ENCODE measurements at regions of chr19 and their contacts with region 1.

Region 1: DNA sequence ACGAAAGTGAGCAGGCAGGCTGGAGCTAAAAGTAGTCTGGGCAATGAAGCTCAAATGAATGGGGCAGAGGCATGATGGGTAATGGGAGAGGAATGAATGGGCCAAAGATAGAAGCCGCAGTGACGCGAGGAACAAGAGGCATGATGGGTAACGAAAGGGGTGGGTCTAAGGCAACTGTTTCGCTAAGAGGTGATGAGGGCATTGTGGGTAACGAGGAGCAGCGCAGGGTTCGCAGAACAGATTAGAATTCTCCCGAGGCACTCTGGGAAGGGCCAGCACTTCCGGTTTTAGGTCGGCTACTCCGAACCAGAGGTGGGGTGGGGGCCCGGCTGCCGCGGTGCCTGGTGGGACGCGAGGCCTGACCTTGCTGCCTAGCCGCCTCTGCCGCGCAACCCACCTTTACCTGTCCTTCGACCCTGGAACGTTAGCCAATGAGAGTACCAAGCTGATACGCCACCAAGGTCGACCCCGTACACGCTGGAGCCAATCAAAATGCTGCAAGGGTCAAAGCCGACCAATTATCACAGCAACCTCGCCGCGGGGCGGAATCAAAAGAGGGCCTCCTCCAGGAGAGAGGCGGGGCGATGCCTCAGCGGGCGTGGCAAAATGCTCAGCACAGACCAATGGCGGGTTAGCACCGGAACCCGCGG is 563 bp upstream of the TOMM40 start:
- DNase-seq: no peak
- ATAC-seq: peak; percentile 84
- H3K4me3 Mint-ChIP-seq: peak overlapping the region; percentile 74
- H3K27ac Mint-ChIP-seq: peak overlapping the region; percentile 96
- H3K4me1 Mint-ChIP-seq: peaks cover 29% of the 10 kb centered on the region
- H3K27me3 Mint-ChIP-seq: no peaks in the 10 kb centered on the region

Region 2: DNA sequence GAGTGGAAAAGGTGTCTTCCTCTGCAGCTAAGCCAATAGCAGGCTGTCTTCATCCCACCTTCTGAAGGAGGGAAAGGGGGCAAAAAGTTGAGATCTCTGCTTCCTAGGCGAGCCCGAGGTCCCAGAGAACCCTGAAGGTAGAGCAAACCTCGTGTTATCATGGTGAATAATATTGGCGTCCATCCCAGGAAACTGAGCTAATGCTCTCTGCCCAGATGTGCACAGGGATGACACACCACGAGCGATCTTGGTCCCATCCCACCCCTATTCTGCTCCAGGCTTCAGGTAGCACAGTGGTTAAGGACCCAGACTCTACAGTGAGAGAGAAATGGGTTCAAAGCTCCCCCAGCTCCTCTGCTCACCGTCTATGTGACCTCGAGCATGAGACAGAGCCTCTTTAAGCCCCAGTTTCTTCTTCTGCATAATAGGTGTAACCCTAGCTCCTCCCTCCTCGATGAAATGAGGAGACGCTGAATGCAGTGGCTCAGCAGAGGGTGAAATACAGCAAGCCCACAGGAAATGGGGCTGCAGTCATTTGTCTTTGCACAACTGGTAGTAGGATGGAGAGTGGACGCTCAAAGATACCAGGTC is 351.2 kb before region 1 on chr19:
- CTCF ChIA-PET with region 1: no interaction called
- POLR2A ChIA-PET with region 1: no interaction called
- intact Hi-C with region 1: no loop called
- DNase-seq: no peak
- ATAC-seq: no peak
- H3K4me3 Mint-ChIP-seq: no peak overlapping the region
- H3K27ac Mint-ChIP-seq: no peak overlapping the region
- H3K4me1 Mint-ChIP-seq: no peaks in the 10 kb centered on the region
- H3K27me3 Mint-ChIP-seq: peaks cover 19% of the 10 kb centered on the region

Region 3: DNA sequence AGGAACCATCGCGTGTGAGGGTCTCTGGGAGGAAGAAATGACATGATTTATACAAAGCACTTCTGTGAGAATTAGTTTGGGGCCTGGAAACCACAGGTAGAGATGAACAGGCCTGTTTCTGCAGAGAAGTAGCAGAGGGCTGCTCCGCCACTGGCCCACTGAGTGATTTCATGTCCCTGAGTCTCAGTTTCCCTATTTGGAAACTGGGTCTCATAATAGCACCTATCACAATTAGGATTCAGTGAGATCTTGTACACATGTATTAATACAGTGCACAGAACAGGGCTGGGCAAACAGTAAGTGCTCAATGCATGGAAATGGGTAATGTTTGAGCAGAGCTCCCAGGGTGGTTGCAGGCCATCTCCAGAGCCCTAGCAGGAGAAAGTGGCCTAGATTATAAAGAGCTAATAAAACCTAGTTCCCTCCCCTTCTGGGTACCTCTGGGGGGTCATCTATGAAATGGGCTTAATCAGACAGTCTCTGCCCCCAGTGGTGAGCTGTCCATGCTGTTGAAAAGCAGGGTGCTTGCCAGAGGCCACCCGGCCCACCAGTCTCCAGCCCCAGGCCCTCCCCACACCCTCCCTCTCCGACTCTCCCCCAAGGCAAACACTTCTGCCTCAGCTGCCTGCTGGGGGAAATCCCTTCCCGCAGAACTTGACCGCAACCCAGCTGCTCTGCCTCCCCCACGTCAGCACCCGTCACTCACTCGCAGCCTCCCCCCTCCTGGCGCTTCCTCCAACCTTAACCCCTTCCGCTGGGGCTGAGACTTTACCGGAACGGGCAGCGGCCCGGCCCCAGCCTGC is 137.5 kb before region 1 on chr19:
- CTCF ChIA-PET with region 1: no interaction called
- POLR2A ChIA-PET with region 1: no interaction called
- intact Hi-C with region 1: loop called in 1 of 2 experiments (anchors 1 kb)
- DNase-seq: peak; percentile 98
- ATAC-seq: peak; percentile 79
- H3K4me3 Mint-ChIP-seq: peak overlapping the region; percentile 94
- H3K27ac Mint-ChIP-seq: peak overlapping the region; percentile 97
- H3K4me1 Mint-ChIP-seq: peaks cover 54% of the 10 kb centered on the region
- H3K27me3 Mint-ChIP-seq: no peaks in the 10 kb centered on the region

Region 4: GRCh38 chr19:44820648-44821609 is 69.6 kb before region 1 on chr19:
- CTCF ChIA-PET with region 1: no interaction called
- POLR2A ChIA-PET with region 1: no interaction called
- intact Hi-C with region 1: no loop called
- DNase-seq: no peak
- ATAC-seq: no peak
- H3K4me3 Mint-ChIP-seq: no peak overlapping the region
- H3K27ac Mint-ChIP-seq: no peak overlapping the region
- H3K4me1 Mint-ChIP-seq: no peaks in the 10 kb centered on the region
- H3K27me3 Mint-ChIP-seq: no peaks in the 10 kb centered on the region

Region 5: DNA sequence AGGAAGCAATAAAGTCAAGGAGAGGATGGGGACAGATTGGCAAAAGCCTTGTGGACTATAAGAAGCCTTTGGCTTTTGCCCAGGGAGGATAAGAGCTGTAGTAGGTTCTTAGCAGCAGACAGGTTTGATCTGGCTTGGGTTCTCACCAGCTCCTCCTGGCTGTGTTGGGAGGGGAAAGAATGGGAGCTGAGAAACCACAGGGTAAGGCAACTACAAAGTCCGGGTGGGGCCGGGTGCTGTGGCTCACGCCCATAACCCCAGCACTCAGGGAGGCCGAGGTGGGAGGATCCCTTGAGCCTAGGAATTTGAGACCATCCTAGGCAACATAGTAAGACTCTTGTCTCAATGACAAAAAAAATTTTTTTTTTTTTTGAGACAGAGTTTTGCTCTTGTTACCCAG is 23.8 kb before region 1 on chr19:
- CTCF ChIA-PET with region 1: no interaction called
- POLR2A ChIA-PET with region 1: no interaction called
- intact Hi-C with region 1: no loop called
- DNase-seq: no peak
- ATAC-seq: no peak
- H3K4me3 Mint-ChIP-seq: no peak overlapping the region
- H3K27ac Mint-ChIP-seq: no peak overlapping the region
- H3K4me1 Mint-ChIP-seq: no peaks in the 10 kb centered on the region
- H3K27me3 Mint-ChIP-seq: no peaks in the 10 kb centered on the region

Region 6: GRCh38 chr19:44960906-44961728 is 70.6 kb after region 1 on chr19:
- CTCF ChIA-PET with region 1: no interaction called
- POLR2A ChIA-PET with region 1: no interaction called
- intact Hi-C with region 1: no loop called
- DNase-seq: no peak
- ATAC-seq: no peak
- H3K4me3 Mint-ChIP-seq: no peak overlapping the region
- H3K27ac Mint-ChIP-seq: no peak overlapping the region
- H3K4me1 Mint-ChIP-seq: peaks cover 33% of the 10 kb centered on the region
- H3K27me3 Mint-ChIP-seq: no peaks in the 10 kb centered on the region

Region 7: GRCh38 chr19:45001087-45001739 is 110.7 kb after region 1 on chr19 and contains the start of gene RELB:
- CTCF ChIA-PET with region 1: no interaction called
- POLR2A ChIA-PET with region 1: no interaction called
- intact Hi-C with region 1: loop called (anchors 1 kb)
- DNase-seq: peak; percentile 97
- ATAC-seq: peak; percentile 53
- H3K4me3 Mint-ChIP-seq: peak within 1 kb of the TSS; percentile 94
- H3K27ac Mint-ChIP-seq: peak within 1 kb of the TSS; percentile 97
- H3K4me1 Mint-ChIP-seq: peaks cover 16% of the 10 kb centered on the region
- H3K27me3 Mint-ChIP-seq: no peaks in the 10 kb centered on the region
- total RNA-seq, gene RELB: 43.8 to 51.2 TPM

Region 8: GRCh38 chr19:45092747-45093678 is 202.5 kb after region 1 on chr19 and contains the start of gene PPP1R37:
- CTCF ChIA-PET with region 1: no interaction called
- POLR2A ChIA-PET with region 1: interaction called, 5 read pairs
- intact Hi-C with region 1: loop called in 1 of 2 experiments (anchors 1 kb)
- DNase-seq: peak; percentile 95
- ATAC-seq: peak; percentile 71
- H3K4me3 Mint-ChIP-seq: peak within 1 kb of the TSS; percentile 89
- H3K27ac Mint-ChIP-seq: peak within 1 kb of the TSS; percentile 97
- H3K4me1 Mint-ChIP-seq: peaks cover 54% of the 10 kb centered on the region
- H3K27me3 Mint-ChIP-seq: no peaks in the 10 kb centered on the region
- total RNA-seq, gene PPP1R37: 12.5 to 14.1 TPM

Region 9: DNA sequence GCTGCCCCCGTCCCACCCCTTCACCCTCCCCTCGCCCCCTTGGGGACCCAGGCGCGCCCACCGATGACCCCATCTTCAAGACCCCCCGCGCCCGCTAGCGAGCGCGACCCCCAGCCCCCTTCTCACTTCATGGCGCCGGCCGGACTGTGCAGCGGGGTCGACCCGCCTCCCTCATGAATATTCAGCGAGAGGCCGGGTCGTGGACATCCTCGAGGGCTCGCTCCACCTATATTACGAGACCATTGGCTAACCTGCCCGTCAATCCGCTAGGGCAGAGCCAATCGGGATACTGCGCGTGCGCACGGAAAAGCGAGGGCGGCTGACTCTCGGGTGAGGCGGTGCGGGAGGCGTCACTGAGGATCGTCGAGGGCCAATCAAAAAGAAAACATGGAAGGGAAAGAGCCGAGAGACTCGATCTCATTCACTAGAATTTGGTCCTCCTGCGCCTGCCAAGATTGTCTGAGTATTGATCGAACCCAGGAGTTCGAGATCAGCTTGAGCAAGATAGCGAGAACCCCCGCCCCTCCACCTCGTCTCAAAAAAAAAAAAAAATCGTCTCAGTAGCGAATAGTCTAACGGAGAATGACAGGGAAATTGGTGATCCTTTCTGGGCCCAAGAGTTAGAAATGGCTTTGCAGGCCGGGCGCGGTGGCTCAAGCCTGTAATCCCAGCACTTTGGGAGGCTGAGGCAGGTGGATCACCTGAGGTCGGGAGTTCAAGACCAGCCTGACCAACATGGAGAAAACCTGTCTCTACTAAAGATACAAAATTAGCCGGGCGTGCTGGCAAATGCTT is 480.1 kb after region 1 on chr19 and contains the start of gene ERCC2:
- CTCF ChIA-PET with region 1: no interaction called
- POLR2A ChIA-PET with region 1: no interaction called
- intact Hi-C with region 1: loop called in 1 of 2 experiments (anchors 1 kb)
- DNase-seq: peak; percentile 100
- ATAC-seq: peak; percentile 100
- H3K4me3 Mint-ChIP-seq: peak within 1 kb of the TSS; percentile 79
- H3K27ac Mint-ChIP-seq: peak within 1 kb of the TSS; percentile 97
- H3K4me1 Mint-ChIP-seq: peaks cover 8% of the 10 kb centered on the region
- H3K27me3 Mint-ChIP-seq: no peaks in the 10 kb centered on the region
- total RNA-seq, gene ERCC2: 27.5 to 30.4 TPM